ENCODE measurements at regions of chr2 and their contacts with region 1.

Region 1: GRCh38 chr2:119468154-119468955 is 36.7 kb downstream of the TMEM37 start:
- DNase-seq: no peak
- H3K4me3 ChIP-seq: no peak overlapping the region
- H3K27ac ChIP-seq: no peak overlapping the region
- H3K4me1 ChIP-seq: peaks cover 0 to 4% (median 0%) of the 10 kb centered on the region in 4 donors
- H3K27me3 ChIP-seq: no peaks in the 10 kb centered on the region
- CTCF ChIP-seq: no peak
- EP300 ChIP-seq: no peak
- POLR2A ChIP-seq: no peak

Region 2: DNA sequence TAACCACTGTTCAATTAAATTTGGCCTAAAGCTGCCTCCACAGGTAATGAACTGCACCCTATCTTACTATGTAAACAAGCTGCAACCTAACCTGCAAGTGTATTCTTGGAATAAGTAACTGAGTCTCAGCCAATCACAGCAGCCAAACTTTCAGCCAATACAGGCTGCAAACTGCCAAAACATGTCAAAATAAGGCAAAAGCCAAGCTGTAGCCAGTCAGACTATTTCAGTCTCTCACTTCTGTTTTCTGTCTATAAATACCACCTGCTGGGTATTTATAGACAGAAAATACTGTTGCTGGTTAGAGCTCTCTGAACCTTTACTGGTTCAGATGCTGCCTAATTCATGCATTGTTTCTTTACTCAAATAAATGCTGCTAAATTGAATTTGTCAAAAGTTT is 116.0 kb before region 1 on chr2:
- in situ Hi-C with region 1: no loop called
- intact Hi-C with region 1: no loop called
- DNase-seq: no peak
- H3K4me3 ChIP-seq: no peak overlapping the region
- H3K27ac ChIP-seq: no peak overlapping the region
- H3K4me1 ChIP-seq: peaks cover 0 to 8% (median 0%) of the 10 kb centered on the region in 4 donors
- H3K27me3 ChIP-seq: no peaks in the 10 kb centered on the region
- CTCF ChIP-seq: no peak
- EP300 ChIP-seq: no peak
- POLR2A ChIP-seq: no peak

Region 3: GRCh38 chr2:119513832-119514231 is 45.5 kb after region 1 on chr2:
- in situ Hi-C with region 1: no loop called
- intact Hi-C with region 1: loop called (anchors 1 kb)
- DNase-seq: no peak
- H3K4me3 ChIP-seq: no peak overlapping the region
- H3K27ac ChIP-seq: no peak overlapping the region
- H3K4me1 ChIP-seq: no peaks in the 10 kb centered on the region
- H3K27me3 ChIP-seq: no peaks in the 10 kb centered on the region
- CTCF ChIP-seq: no peak
- EP300 ChIP-seq: no peak
- POLR2A ChIP-seq: no peak